SK-N-SH (cell line): ENCODE measurements at regions of chr16 and their contacts with region 1.

Region 1: GRCh38 chr16:75110637-75111513 is 5.7 kb downstream of the LDHD start:
- DNase-seq: peak; percentile 91
- H3K4me3 ChIP-seq: peak overlapping the region; percentile 18 to 37; a peak in 3 of 4 replicates
- H3K27ac ChIP-seq: peak overlapping the region; percentile 73 to 86
- H3K4me1 ChIP-seq: peaks cover 36 to 50% of the 10 kb centered on the region in 2 experiments; a peak in 3 of 4 replicates
- H3K27me3 ChIP-seq: no peaks in the 10 kb centered on the region
- CTCF ChIP-seq: peak; percentile 86
- EP300 ChIP-seq: no peak
- RAD21 ChIP-seq: peak; percentile 91

Region 2: GRCh38 chr16:74984535-74985296 is 126.2 kb before region 1 on chr16 and contains the start of gene WDR59:
- CTCF ChIA-PET with region 1: interaction called, 23 read pairs
- POLR2A ChIA-PET with region 1: no interaction called
- DNase-seq: peak; percentile 97
- H3K4me3 ChIP-seq: peak within 1 kb of the TSS; percentile 76 to 95
- H3K27ac ChIP-seq: peak within 1 kb of the TSS; percentile 38 to 71; a peak in 2 of 4 replicates
- H3K4me1 ChIP-seq: peaks cover 0 to 9% of the 10 kb centered on the region in 2 experiments; a peak in 1 of 4 replicates
- H3K27me3 ChIP-seq: no peaks in the 10 kb centered on the region
- CTCF ChIP-seq: no peak
- EP300 ChIP-seq: no peak
- RAD21 ChIP-seq: no peak
- polyA plus RNA-seq, gene WDR59: 48.2 and 60.2 TPM in 2 replicates

Region 3: GRCh38 chr16:74998481-74999218 is 112.2 kb before region 1 on chr16 and contains the start of gene ZNRF1:
- CTCF ChIA-PET with region 1: interaction called, 182 read pairs
- POLR2A ChIA-PET with region 1: interaction called, 12 read pairs
- DNase-seq: peak; percentile 98
- H3K4me3 ChIP-seq: peak within 1 kb of the TSS; percentile 72 to 76
- H3K27ac ChIP-seq: peak within 1 kb of the TSS; percentile 31 to 80; a peak in 3 of 4 replicates
- H3K4me1 ChIP-seq: peaks cover 0 to 26% of the 10 kb centered on the region in 2 experiments; a peak in 3 of 4 replicates
- H3K27me3 ChIP-seq: no peaks in the 10 kb centered on the region
- CTCF ChIP-seq: peak; percentile 79
- EP300 ChIP-seq: 0 out of 4 replicates have a peak, but pooled peaks of 1 of the 2 experiments have one; percentile 22
- RAD21 ChIP-seq: peak; percentile 77
- polyA plus RNA-seq, gene ZNRF1: 20.6 and 23.7 TPM in 2 replicates

Region 4: DNA sequence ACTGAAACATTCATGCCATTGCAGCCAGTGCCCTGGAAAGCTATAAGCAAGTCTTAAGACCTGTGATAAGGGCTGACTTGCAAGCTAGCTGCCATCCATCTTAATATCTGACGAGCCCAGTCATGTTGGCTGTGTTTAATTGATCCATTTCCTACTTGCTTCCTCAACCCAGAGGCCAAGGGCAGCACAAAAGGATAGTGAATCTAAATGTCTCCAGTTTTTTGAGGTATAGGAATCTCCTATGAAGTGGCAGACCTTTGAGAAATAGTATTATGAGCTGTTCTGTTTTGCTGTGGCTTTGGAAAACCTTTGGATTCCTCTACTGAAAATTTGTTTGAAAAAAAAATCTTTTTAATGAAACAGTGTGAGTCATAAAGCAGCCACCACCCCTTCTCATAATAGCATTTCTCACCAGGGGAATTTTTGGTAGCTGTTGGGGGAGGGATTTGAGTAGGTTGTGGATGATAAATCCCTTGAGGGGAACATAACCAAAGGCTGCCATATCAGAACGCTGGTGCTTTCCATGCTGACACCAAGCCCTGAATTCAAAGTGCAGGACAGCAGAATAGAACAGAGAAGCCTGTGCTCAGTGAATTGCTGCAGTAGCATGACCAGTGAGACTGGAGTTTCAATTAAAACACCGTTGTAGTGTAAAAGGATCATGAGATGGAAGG is 99.1 kb before region 1 on chr16:
- CTCF ChIA-PET with region 1: interaction called, 30 read pairs
- POLR2A ChIA-PET with region 1: interaction called, 3 read pairs
- DNase-seq: no peak
- H3K4me3 ChIP-seq: no peak overlapping the region
- H3K27ac ChIP-seq: peak overlapping the region; percentile 68 to 77
- H3K4me1 ChIP-seq: peaks cover 11 to 25% of the 10 kb centered on the region in 2 experiments; a peak in 3 of 4 replicates
- H3K27me3 ChIP-seq: no peaks in the 10 kb centered on the region
- CTCF ChIP-seq: no peak
- EP300 ChIP-seq: no peak
- RAD21 ChIP-seq: no peak

Region 5: DNA sequence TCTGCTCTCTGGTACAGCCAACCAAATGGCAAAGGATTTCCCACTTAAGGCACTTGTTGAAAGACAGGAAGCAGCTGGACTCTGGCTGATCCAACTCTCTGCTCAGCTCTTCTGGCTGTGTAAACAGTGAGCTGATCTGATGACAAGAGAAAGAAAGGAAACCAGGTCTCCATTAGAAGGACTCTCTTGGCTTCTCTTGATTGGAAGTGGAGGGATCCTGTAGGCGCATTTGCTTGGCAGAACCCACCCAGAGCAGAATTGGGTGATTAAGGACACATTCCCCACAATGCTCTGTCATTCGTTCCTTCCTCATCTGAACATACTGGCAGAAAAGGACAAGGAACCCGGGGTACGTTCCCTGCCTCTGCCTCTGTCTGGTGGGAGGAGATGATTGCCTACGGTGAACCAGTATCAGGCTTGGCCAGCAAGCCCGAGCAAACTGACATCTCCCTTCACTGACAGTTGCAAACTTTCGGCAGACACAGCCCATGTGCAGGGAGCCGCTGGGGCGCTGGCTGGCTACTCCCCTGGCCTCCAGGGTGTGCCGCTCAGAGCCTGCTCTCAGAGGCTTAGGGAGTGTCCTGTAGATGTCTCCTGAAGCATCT is 23.4 kb before region 1 on chr16:
- CTCF ChIA-PET with region 1: interaction called, 18 read pairs
- POLR2A ChIA-PET with region 1: interaction called, 4 read pairs
- DNase-seq: peak; percentile 36
- H3K4me3 ChIP-seq: no peak overlapping the region
- H3K27ac ChIP-seq: peak overlapping the region; percentile 27 to 78; a peak in 3 of 4 replicates
- H3K4me1 ChIP-seq: peaks cover 13 to 36% of the 10 kb centered on the region in 2 experiments; a peak in 3 of 4 replicates
- H3K27me3 ChIP-seq: no peaks in the 10 kb centered on the region
- CTCF ChIP-seq: no peak
- EP300 ChIP-seq: no peak
- RAD21 ChIP-seq: no peak

Region 6: GRCh38 chr16:75121949-75122568 is 11.2 kb after region 1 on chr16:
- CTCF ChIA-PET with region 1: interaction called, 14 read pairs
- POLR2A ChIA-PET with region 1: interaction called, 3 read pairs
- DNase-seq: no peak
- H3K4me3 ChIP-seq: no peak overlapping the region
- H3K27ac ChIP-seq: no peak overlapping the region
- H3K4me1 ChIP-seq: no peaks in the 10 kb centered on the region
- H3K27me3 ChIP-seq: no peaks in the 10 kb centered on the region
- CTCF ChIP-seq: no peak
- EP300 ChIP-seq: no peak
- RAD21 ChIP-seq: no peak